ENCODE measurements at regions of chr9 and their contacts with region 1.

Region 1: GRCh38 chr9:15606643-15607472 is 54.0 kb downstream of the CCDC171 start:
- DNase-seq: no peak
- H3K4me3 ChIP-seq: no peak overlapping the region
- H3K27ac ChIP-seq: no peak overlapping the region
- H3K4me1 ChIP-seq: no peaks in the 10 kb centered on the region
- H3K27me3 ChIP-seq: no peaks in the 10 kb centered on the region
- CTCF ChIP-seq: peak; percentile 83

Region 2: DNA sequence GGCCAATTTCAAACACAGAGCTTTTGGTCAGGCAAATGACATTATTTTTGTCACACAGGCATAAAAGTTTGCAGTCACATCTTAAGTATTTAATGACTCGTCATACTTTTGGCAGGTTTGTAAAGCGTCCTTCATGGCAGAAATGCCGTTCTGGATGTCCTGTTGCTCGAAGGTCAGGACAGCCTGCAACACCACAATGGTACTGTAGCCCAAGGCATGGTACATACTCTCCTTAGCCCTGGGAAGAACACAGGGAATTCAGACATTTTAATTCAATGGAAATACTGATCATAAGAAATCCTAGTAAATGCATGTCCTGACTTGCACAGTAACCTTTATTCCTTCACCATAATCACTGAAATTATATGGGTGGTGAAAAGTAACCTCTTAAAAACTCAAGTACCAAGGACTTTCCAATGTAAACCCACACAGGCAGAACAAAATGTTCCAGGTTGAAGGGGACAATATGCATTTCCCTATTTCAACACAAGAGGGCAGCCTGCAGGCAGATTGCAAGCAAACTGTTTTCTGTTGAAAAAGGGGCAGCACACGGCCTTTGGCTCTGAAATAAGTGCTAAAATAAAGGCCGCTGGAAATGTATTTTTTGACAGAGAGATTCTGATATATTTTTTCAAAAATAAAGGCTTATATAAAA is 395.6 kb before region 1 on chr9:
- intact Hi-C with region 1: loop called (anchors 5 kb)
- DNase-seq: no peak
- H3K4me3 ChIP-seq: no peak overlapping the region
- H3K27ac ChIP-seq: peak overlapping the region; percentile 33
- H3K4me1 ChIP-seq: peaks cover 11% of the 10 kb centered on the region
- H3K27me3 ChIP-seq: no peaks in the 10 kb centered on the region
- CTCF ChIP-seq: peak; percentile 95

Region 3: GRCh38 chr9:15280647-15281046 is 326.2 kb before region 1 on chr9:
- intact Hi-C with region 1: loop called (anchors 5 kb)
- DNase-seq: no peak
- H3K4me3 ChIP-seq: no peak overlapping the region
- H3K27ac ChIP-seq: no peak overlapping the region
- H3K4me1 ChIP-seq: no peaks in the 10 kb centered on the region
- H3K27me3 ChIP-seq: no peaks in the 10 kb centered on the region
- CTCF ChIP-seq: no peak

Region 4: GRCh38 chr9:15499139-15499538 is 107.7 kb before region 1 on chr9:
- intact Hi-C with region 1: loop called (anchors 10 kb)
- DNase-seq: no peak
- H3K4me3 ChIP-seq: no peak overlapping the region
- H3K27ac ChIP-seq: no peak overlapping the region
- H3K4me1 ChIP-seq: peaks cover 7% of the 10 kb centered on the region
- H3K27me3 ChIP-seq: no peaks in the 10 kb centered on the region
- CTCF ChIP-seq: no peak

Region 5: GRCh38 chr9:15529566-15530324 is 77.1 kb before region 1 on chr9:
- intact Hi-C with region 1: no loop called
- DNase-seq: no peak
- H3K4me3 ChIP-seq: no peak overlapping the region
- H3K27ac ChIP-seq: no peak overlapping the region
- H3K4me1 ChIP-seq: no peaks in the 10 kb centered on the region
- H3K27me3 ChIP-seq: peaks cover 3% of the 10 kb centered on the region
- CTCF ChIP-seq: no peak

Region 6: GRCh38 chr9:15778861-15779260 is 172.0 kb after region 1 on chr9:
- intact Hi-C with region 1: no loop called
- DNase-seq: no peak
- H3K4me3 ChIP-seq: no peak overlapping the region
- H3K27ac ChIP-seq: no peak overlapping the region
- H3K4me1 ChIP-seq: no peaks in the 10 kb centered on the region
- H3K27me3 ChIP-seq: no peaks in the 10 kb centered on the region
- CTCF ChIP-seq: no peak